ENCODE measurements at regions of chr19 and their contacts with region 1.

Region 1: GRCh38 chr19:40502647-40503319 is 36.0 kb downstream of the SPTBN4 start:
- DNase-seq: peak; percentile 46 to 54
- H3K4me3 ChIP-seq: no peak overlapping the region
- H3K27ac ChIP-seq: no peak overlapping the region
- H3K4me1 ChIP-seq: no peaks in the 10 kb centered on the region
- H3K27me3 ChIP-seq: peaks cover 23% of the 10 kb centered on the region
- CTCF ChIP-seq: peak; percentile 55; the same call in 1 of the 2 replicates

Region 2: DNA sequence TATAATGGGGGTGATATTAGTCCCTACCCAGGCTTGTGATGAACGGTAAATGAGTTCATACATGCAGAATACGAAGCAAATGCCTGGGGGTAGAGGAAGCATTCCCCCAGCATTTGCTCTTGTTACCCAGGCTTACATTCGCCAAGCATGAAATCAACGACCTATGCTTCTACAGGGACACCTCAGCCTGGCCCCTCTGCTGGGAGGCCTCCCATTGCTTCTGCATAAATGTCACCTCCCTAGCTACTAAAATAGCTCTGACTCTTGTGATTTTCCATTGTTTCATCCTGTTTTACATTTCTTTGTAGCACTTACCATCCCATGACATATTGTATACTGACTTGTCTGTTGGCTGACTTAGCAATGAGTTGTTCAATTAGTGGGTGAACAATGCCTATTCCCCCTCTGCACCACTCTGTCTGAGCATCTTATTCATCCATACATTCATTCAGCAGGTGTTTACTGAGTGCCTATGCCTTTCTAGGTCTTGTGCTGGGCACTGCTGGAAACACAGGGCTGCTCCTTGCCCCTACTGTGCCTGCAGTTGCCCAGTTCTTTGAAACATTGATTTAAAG is 11.0 kb after region 1 on chr19:
- CTCF ChIA-PET with region 1: interaction called, 17 read pairs
- POLR2A ChIA-PET with region 1: no interaction called
- intact Hi-C with region 1: no loop called
- DNase-seq: no peak
- H3K4me3 ChIP-seq: no peak overlapping the region
- H3K27ac ChIP-seq: no peak overlapping the region
- H3K4me1 ChIP-seq: no peaks in the 10 kb centered on the region
- H3K27me3 ChIP-seq: peaks cover 22% of the 10 kb centered on the region
- CTCF ChIP-seq: no peak